Ovary (tissue), 10 donors: ENCODE measurements at regions of chr3 and their contacts with region 1.

Region 1: DNA sequence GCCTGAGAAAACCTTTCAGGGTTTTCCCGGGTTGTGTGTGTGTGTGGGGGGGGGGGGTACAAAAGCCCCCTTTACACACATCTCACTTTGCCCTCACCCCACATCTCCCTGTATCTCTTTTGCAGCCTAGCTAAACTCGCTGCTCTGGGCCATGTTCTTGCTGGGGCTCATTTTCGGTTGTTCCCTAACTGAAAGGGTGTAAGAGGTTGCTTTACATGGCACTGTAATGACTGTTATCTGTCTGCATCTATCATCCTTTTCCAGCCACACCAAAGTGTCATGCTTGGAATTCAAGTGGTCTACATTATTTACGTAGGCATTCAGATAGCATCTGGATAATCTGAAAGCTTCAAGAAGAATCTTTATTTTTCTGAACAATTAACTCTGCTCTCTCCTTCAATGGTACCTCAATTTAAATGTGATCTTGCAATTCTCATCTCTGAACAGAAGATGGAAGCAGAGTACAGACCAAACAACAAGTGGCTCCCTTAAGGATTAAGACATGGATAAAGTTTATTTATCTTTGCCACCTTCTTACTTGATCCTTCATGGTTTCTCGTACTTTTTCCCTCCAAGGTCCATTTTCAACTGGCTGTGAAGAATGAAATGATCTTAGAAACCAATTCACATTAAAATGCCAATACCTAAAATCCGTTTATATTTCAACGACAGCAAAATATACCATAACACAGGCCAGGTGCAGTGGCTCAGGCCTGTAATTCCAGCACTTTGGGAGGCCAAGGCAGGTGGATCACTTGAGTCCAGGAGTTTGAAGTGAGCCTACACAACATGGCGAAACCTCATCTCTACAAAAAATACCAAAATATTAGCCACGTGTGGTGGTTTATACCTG is 34.9 kb downstream of the DCLK3 start:
- DNase-seq: no peak
- H3K4me3 ChIP-seq: no peak overlapping the region
- H3K27ac ChIP-seq: no peak overlapping the region
- H3K4me1 ChIP-seq: no peaks in the 10 kb centered on the region
- H3K27me3 ChIP-seq: no peaks in the 10 kb centered on the region
- CTCF ChIP-seq: peak; percentile 41 to 62 (median 49)
- EP300 ChIP-seq: no peak
- POLR2A ChIP-seq: no peak

Region 2: GRCh38 chr3:36777424-36778218 is 48.2 kb after region 1 on chr3:
- intact Hi-C with region 1: no loop called
- DNase-seq: no peak
- H3K4me3 ChIP-seq: no peak overlapping the region
- H3K27ac ChIP-seq: no peak overlapping the region
- H3K4me1 ChIP-seq: no peaks in the 10 kb centered on the region
- H3K27me3 ChIP-seq: no peaks in the 10 kb centered on the region
- CTCF ChIP-seq: no peak
- EP300 ChIP-seq: no peak
- POLR2A ChIP-seq: no peak

Region 3: GRCh38 chr3:36868614-36869436 is 139.4 kb after region 1 on chr3:
- intact Hi-C with region 1: loop called in 2 of 4 experiments (anchors 5 to 10 kb)
- DNase-seq: peak in 4 of 5 donors; percentile 22 to 58 (median 42)
- H3K4me3 ChIP-seq: no peak overlapping the region
- H3K27ac ChIP-seq: no peak overlapping the region
- H3K4me1 ChIP-seq: peaks cover 1% of the 10 kb centered on the region
- H3K27me3 ChIP-seq: no peaks in the 10 kb centered on the region
- CTCF ChIP-seq: peak in 2 of 3 donors; percentile 51 to 57
- EP300 ChIP-seq: no peak
- POLR2A ChIP-seq: no peak

Region 4: DNA sequence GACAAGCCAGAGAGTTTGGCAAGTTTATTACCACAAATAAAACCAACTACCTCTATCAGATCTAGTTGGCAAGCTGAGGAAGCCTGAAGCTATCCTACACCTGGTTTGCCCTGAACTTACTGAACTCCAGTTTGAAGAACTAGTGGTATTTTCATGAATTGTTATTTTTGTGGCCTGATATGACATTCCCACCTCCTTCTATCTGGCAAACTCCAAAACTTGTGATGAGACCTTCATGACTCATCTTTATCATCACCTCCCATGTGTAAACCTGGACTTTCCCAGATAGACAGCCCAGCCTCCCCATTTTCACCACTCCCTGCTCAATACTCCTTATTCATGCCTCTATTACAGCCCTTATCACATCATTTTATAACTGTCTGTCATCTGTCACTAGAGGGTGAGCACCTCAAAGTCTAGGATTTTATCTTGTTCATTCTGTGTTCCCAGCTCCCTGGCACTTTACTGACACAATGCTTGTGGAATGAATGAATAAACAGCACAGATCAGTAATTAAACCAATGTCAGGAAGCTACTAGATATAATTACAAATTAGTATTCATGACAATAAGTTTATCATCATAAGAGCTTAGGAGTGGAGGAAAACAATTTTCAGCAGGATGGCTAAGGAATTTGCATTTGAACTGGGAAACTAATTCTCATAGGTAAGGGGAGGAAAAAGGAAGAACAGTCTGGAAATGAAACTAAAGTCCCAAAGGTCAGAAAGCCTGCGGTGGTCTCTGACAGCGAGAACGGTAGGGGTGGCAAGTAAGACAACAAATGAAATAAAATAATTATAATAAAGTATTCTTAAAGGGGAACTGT is 228.6 kb after region 1 on chr3:
- intact Hi-C with region 1: loop called in 3 of 4 experiments (anchors 5 to 10 kb)
- DNase-seq: no peak
- H3K4me3 ChIP-seq: peak overlapping the region; percentile 12
- H3K27ac ChIP-seq: no peak overlapping the region
- H3K4me1 ChIP-seq: no peaks in the 10 kb centered on the region
- H3K27me3 ChIP-seq: no peaks in the 10 kb centered on the region
- CTCF ChIP-seq: no peak
- EP300 ChIP-seq: no peak
- POLR2A ChIP-seq: no peak

Region 5: GRCh38 chr3:37210230-37210629 is 480.8 kb after region 1 on chr3:
- intact Hi-C with region 1: loop called in 1 of 4 experiments (anchors 10 kb)
- DNase-seq: no peak
- H3K4me3 ChIP-seq: no peak overlapping the region
- H3K27ac ChIP-seq: no peak overlapping the region
- H3K4me1 ChIP-seq: no peaks in the 10 kb centered on the region
- H3K27me3 ChIP-seq: no peaks in the 10 kb centered on the region
- CTCF ChIP-seq: no peak
- EP300 ChIP-seq: no peak
- POLR2A ChIP-seq: no peak

Region 6: GRCh38 chr3:37221407-37221806 is 492.0 kb after region 1 on chr3:
- intact Hi-C with region 1: loop called in 2 of 4 experiments (anchors 10 kb)
- DNase-seq: no peak
- H3K4me3 ChIP-seq: no peak overlapping the region
- H3K27ac ChIP-seq: no peak overlapping the region
- H3K4me1 ChIP-seq: no peaks in the 10 kb centered on the region
- H3K27me3 ChIP-seq: no peaks in the 10 kb centered on the region
- CTCF ChIP-seq: no peak
- EP300 ChIP-seq: no peak
- POLR2A ChIP-seq: no peak

Region 7: GRCh38 chr3:37668431-37668817 is 939.0 kb after region 1 on chr3:
- intact Hi-C with region 1: no loop called
- DNase-seq: peak; percentile 44 to 57 (median 47)
- H3K4me3 ChIP-seq: no peak overlapping the region
- H3K27ac ChIP-seq: no peak overlapping the region
- H3K4me1 ChIP-seq: peaks cover 12% of the 10 kb centered on the region
- H3K27me3 ChIP-seq: no peaks in the 10 kb centered on the region
- CTCF ChIP-seq: no peak
- EP300 ChIP-seq: no peak
- POLR2A ChIP-seq: no peak